Activated CD4-positive, alpha-beta T cell treated with anti-CD3 and anti-CD28 coated beads for 36 hours (primary cell): ENCODE measurements at regions of chr11 and their contacts with region 1.

Region 1: DNA sequence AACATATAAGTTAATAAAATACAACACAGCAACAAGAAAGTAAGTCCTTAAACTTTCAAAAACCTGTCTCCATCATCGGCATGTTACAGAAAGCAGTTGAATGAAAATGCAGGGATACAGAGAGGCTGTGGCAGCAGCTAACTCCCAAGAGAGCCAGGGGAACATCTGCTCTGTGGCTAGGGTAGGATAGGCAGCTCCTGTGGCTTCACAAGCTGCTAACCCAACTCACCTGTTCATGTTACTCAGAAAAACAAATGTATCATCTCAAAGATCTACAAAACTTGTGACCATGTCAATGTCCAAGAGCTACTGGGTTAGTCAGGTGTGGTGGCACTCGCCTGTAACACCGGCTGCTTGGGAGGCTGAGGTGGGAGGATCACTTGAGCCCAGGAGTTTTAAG is 15.2 kb upstream of the PLAAT3 start:
- DNase-seq: no peak
- ATAC-seq: no peak
- H3K4me3 Mint-ChIP-seq: no peak overlapping the region
- H3K27ac Mint-ChIP-seq: no peak overlapping the region
- H3K4me1 Mint-ChIP-seq: peaks cover 15% of the 10 kb centered on the region
- H3K27me3 Mint-ChIP-seq: no peaks in the 10 kb centered on the region

Region 2: DNA sequence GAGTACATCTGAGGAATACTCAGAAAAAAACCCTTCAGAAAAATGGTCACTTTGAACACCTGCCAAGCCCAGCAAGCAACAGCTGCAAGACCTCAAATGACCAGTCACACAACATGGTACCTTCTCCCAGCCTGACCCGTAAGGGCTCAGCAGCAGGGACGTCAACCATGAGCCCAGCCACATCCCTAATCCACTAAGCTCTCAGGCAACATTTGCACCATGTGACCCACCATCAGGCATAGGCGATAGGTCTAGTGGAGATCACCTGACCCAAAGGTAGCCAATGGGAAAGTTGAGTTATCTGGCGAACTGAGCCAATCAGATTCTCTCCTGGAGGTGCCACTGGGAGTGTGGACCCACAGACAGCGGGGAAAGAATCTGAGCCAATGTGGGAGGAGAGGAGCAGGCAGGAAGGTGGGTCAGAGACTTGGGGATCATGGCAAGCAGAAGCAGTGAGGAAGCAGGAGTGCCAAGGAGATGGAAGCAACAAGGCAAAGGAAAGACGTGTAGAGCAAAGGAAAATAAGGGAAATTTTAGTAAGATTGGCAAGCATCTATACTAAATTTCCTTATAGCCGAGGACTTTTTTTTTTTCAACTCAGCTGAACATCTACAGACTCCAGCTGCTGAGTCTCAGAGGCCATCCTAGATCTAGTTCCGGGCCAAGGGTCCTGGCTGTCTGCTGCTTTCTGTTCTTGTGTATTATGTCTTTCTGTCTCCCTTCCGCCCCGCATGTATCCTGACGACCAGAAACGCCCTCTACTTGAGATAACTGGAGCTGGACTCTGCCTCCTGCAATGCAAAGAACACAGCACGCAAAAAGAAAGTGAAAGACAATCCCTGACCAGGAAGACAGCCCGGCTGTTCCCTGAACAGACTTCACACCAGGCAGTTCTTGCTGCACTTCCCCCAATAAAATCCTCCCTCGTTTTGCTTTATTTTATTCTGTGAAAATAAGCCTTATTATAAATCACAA is 55.3 kb before region 1 on chr11:
- CTCF ChIA-PET with region 1: no interaction called
- POLR2A ChIA-PET with region 1: no interaction called
- intact Hi-C with region 1: loop called in 1 of 2 experiments (anchors 5 kb)
- DNase-seq: peak; percentile 46
- ATAC-seq: peak; percentile 84
- H3K4me3 Mint-ChIP-seq: peak overlapping the region; percentile 56
- H3K27ac Mint-ChIP-seq: peak overlapping the region; percentile 79
- H3K4me1 Mint-ChIP-seq: peaks cover 16% of the 10 kb centered on the region
- H3K27me3 Mint-ChIP-seq: no peaks in the 10 kb centered on the region